HepG2 (cell line): ENCODE measurements at regions of chr20 and their contacts with region 1.

Region 1: DNA sequence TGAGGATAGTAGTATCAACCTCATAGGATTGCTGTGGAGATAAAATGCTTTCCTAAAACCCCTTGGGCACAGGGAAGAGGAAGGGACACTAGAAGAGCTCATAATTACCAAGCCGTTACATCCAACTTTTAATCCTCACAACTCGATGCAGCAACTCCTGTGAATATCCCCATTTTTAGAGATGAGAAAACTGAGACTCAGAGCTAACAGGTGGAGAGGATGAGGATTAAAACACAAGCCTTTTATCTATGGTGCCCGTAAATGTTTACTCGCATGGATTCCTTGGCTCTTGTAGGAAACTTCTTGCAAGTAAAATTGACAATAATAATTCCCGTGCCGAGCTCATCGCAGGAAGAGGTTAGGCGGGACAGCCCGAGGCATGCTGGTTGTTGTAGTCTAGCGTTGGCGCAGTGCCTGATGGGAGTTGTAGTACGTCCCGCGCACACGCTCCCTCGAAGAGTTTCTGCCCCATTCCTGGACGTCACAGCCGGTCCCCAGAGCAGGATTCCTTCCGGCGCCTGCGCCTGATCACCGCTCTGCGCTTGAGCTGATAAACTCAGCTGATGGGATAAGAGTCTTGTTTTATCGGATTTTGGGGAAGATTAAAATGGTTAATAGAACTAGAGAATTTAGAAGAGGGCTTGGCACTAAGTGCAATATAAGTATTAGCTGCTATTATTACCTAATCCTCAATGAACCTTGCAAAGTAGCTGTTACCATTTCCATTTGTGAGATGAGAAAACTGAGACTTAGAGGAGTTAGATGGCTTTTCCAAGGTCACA is 2.8 kb upstream of the UBE2V1 start:
- DNase-seq: peak; percentile 96
- ATAC-seq: peak; percentile 82
- H3K4me3 ChIP-seq: peak overlapping the region; percentile 65 to 94 (median 78)
- H3K27ac ChIP-seq: peak overlapping the region; percentile 40
- H3K4me1 ChIP-seq: peaks cover 56% of the 10 kb centered on the region
- H3K27me3 ChIP-seq: no peaks in the 10 kb centered on the region; a peak in 1 of 5 replicates
- CTCF ChIP-seq: 0 out of 2 replicates have a peak, but pooled peaks have one; percentile 2
- EP300 ChIP-seq: no peak; a peak in 1 of 4 replicates
- POLR2A ChIP-seq: peak; percentile 57 to 90; a peak in 3 of 4 replicates
- RAD21 ChIP-seq: 0 out of 2 replicates have a peak, but pooled peaks have one; percentile 32

Region 2: GRCh38 chr20:49915378-49916145 is 200.2 kb before region 1 on chr20 and contains the start of gene SPATA2:
- CTCF ChIA-PET with region 1: no interaction called
- POLR2A ChIA-PET with region 1: interaction called, 10 read pairs
- in situ Hi-C with region 1: no loop called
- intact Hi-C with region 1: no loop called
- DNase-seq: peak; percentile 98
- ATAC-seq: peak; percentile 82
- H3K4me3 ChIP-seq: peak within 1 kb of the TSS; percentile 74 to 91 (median 90)
- H3K27ac ChIP-seq: peak within 1 kb of the TSS; percentile 97
- H3K4me1 ChIP-seq: peaks cover 70% of the 10 kb centered on the region
- H3K27me3 ChIP-seq: no peaks in the 10 kb centered on the region; a peak in 1 of 5 replicates
- CTCF ChIP-seq: peak; percentile 33
- EP300 ChIP-seq: 0 out of 4 replicates have a peak, but pooled peaks of 1 of the 2 experiments have one; percentile 8
- POLR2A ChIP-seq: peak; percentile 72 to 83
- RAD21 ChIP-seq: peak; percentile 51
- total RNA-seq, gene SPATA2: 3.2 and 4.3 TPM in 2 replicates

Region 3: DNA sequence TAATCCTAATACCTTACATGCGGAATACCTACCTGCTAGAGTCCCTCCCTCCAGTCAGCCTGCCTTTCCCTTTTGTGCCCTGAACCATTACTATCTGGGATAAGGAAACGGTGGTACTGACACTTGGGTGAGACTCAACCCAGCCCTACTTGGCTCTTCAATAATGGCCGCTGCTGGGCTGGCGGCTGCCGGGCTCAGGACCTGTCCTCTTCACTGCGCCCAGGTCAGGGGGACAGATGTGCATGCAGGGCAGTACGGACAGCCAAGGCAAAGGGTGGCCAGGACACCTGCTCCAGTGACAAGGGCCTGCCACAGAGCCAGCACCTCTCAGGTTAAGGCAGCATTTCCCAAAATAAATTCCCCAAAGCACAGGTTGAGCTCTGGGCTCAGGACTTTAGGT is 32.7 kb before region 1 on chr20:
- CTCF ChIA-PET with region 1: no interaction called
- POLR2A ChIA-PET with region 1: no interaction called
- in situ Hi-C with region 1: no loop called
- intact Hi-C with region 1: no loop called
- DNase-seq: no peak
- ATAC-seq: no peak
- H3K4me3 ChIP-seq: no peak overlapping the region
- H3K27ac ChIP-seq: no peak overlapping the region
- H3K4me1 ChIP-seq: peaks cover 16% of the 10 kb centered on the region
- H3K27me3 ChIP-seq: no peaks in the 10 kb centered on the region
- CTCF ChIP-seq: no peak
- EP300 ChIP-seq: no peak
- POLR2A ChIP-seq: no peak
- RAD21 ChIP-seq: no peak

Region 4: GRCh38 chr20:50153485-50154377 is 37.9 kb after region 1 on chr20 and contains the start of gene PEDS1:
- CTCF ChIA-PET with region 1: no interaction called
- POLR2A ChIA-PET with region 1: interaction called, 43 read pairs
- in situ Hi-C with region 1: no loop called
- intact Hi-C with region 1: no loop called
- DNase-seq: peak; percentile 83
- ATAC-seq: peak; percentile 95
- H3K4me3 ChIP-seq: peak within 1 kb of the TSS; percentile 91 to 98 (median 96)
- H3K27ac ChIP-seq: peak within 1 kb of the TSS; percentile 73
- H3K4me1 ChIP-seq: peaks cover 72% of the 10 kb centered on the region
- H3K27me3 ChIP-seq: peaks cover 0 to 4% of the 10 kb centered on the region in 2 experiments; a peak in 1 of 5 replicates
- CTCF ChIP-seq: no peak
- EP300 ChIP-seq: 0 out of 4 replicates have a peak, but pooled peaks of 1 of the 2 experiments have one; percentile 18
- POLR2A ChIP-seq: peak; percentile 89 to 93
- RAD21 ChIP-seq: peak; percentile 64
- total RNA-seq, gene PEDS1: 21.4 and 30.5 TPM in 2 replicates

Region 5: GRCh38 chr20:50172347-50173013 is 56.7 kb after region 1 on chr20:
- CTCF ChIA-PET with region 1: interaction called, 115 read pairs
- POLR2A ChIA-PET with region 1: interaction called, 104 read pairs
- in situ Hi-C with region 1: loop called (anchors 5 kb)
- intact Hi-C with region 1: no loop called
- DNase-seq: peak; percentile 97
- ATAC-seq: peak; percentile 96
- H3K4me3 ChIP-seq: peak overlapping the region; percentile 63 to 78 (median 64)
- H3K27ac ChIP-seq: peak overlapping the region; percentile 81
- H3K4me1 ChIP-seq: peaks cover 57% of the 10 kb centered on the region
- H3K27me3 ChIP-seq: no peaks in the 10 kb centered on the region; a peak in 1 of 5 replicates
- CTCF ChIP-seq: peak; percentile 44
- EP300 ChIP-seq: peak; percentile 45 to 58; a peak in 1 of 4 replicates
- POLR2A ChIP-seq: peak; percentile 95 to 96
- RAD21 ChIP-seq: peak; percentile 48

Region 6: DNA sequence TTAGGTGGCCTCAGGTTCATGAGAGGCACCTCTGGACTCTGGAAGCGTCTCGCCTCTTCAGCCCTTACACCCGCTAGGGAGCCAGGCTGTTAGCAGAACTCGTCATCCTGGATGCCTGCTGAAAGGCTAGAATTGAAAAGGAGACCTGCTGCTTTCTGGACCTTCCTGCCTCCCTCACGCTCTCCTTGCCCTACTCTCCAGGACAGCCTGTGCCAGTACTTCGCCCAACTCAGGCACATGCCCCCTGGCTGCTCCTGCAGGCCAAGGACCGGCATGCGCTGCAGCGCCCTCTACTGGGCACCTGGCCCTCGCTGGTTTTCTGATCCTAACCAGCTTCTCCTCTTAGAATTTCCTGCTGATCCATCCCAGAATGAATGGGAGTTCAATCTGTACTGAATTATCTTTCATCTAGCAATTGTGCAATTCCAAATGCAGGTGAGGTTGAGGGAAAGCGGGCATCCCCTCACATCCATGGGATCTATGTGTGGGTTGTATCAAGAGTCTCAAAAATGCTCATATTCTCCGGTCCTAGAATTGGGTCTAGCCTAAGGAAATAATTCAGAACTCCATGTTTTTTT is 472.3 kb after region 1 on chr20:
- CTCF ChIA-PET with region 1: no interaction called
- POLR2A ChIA-PET with region 1: no interaction called
- in situ Hi-C with region 1: loop called (anchors 10 kb)
- intact Hi-C with region 1: loop called (anchors 5 kb)
- DNase-seq: peak; percentile 67
- ATAC-seq: peak; percentile 82
- H3K4me3 ChIP-seq: no peak overlapping the region
- H3K27ac ChIP-seq: no peak overlapping the region
- H3K4me1 ChIP-seq: no peaks in the 10 kb centered on the region
- H3K27me3 ChIP-seq: no peaks in the 10 kb centered on the region
- CTCF ChIP-seq: peak; percentile 98
- EP300 ChIP-seq: no peak
- POLR2A ChIP-seq: no peak
- RAD21 ChIP-seq: peak; percentile 80